Activated CD8-positive, alpha-beta T cell treated with anti-CD3 and anti-CD28 coated beads, Interleukin-2, amount 10 ng/mL, durations not matched to agents 7 days and 5 days (primary cell): ENCODE measurements at regions of chr15 and their contacts with region 1.

Region 1: DNA sequence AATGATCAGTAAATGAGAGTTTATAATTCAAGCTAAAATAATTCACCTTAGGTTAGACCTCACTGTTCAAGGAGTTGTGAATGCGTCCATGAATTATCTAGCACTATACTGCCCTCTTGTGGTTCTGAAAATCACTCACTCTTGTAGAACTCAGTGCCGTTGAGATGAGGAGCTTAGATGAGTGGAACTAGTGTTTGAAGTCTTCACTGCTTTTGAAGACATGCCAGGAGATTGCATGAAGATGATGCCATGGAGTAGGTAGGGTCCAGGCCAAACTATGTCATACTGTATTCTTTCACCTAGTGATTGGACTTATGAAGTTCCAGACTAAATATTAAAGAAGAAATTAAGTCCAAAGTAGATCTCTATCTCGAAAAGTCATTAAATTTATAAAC is 28.8 kb downstream of the LYSMD4 start:
- DNase-seq: peak; percentile 65
- ATAC-seq: peak; percentile 71
- H3K4me3 Mint-ChIP-seq: no peak overlapping the region
- H3K27ac Mint-ChIP-seq: no peak overlapping the region
- H3K4me1 Mint-ChIP-seq: peaks cover 48% of the 10 kb centered on the region
- H3K27me3 Mint-ChIP-seq: no peaks in the 10 kb centered on the region

Region 2: GRCh38 chr15:99250494-99251435 is 453.7 kb before region 1 on chr15:
- CTCF ChIA-PET with region 1: interaction called, 10 read pairs
- POLR2A ChIA-PET with region 1: no interaction called
- DNase-seq: peak; percentile 99
- ATAC-seq: peak; percentile 99
- H3K4me3 Mint-ChIP-seq: peak overlapping the region; percentile 87
- H3K27ac Mint-ChIP-seq: peak overlapping the region; percentile 91
- H3K4me1 Mint-ChIP-seq: peaks cover 24% of the 10 kb centered on the region
- H3K27me3 Mint-ChIP-seq: peaks cover 5% of the 10 kb centered on the region

Region 3: DNA sequence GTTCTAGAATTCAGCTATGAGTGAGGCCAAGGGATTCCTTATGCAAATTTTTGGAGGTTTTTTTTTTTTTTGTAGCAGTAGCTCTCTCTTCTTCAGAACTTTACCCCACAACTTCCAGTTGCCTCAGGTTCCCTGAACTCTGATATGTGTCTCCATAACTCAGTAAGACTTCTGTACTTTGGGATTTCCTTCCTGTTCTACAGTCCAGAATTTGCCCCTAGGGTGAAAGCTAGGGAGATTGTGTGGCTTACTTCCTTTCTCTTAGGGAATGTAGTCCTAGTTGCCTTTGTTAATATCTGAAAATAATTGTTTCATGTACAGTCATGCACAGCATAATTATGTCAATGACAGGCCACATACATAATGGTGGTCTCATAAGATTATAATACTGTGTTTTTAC is 422.3 kb before region 1 on chr15:
- CTCF ChIA-PET with region 1: interaction called, 120 read pairs
- POLR2A ChIA-PET with region 1: interaction called, 4 read pairs
- DNase-seq: no peak
- ATAC-seq: no peak
- H3K4me3 Mint-ChIP-seq: no peak overlapping the region
- H3K27ac Mint-ChIP-seq: no peak overlapping the region
- H3K4me1 Mint-ChIP-seq: peaks cover 23% of the 10 kb centered on the region
- H3K27me3 Mint-ChIP-seq: no peaks in the 10 kb centered on the region

Region 4: GRCh38 chr15:99371180-99372103 is 333.0 kb before region 1 on chr15:
- CTCF ChIA-PET with region 1: interaction called, 22 read pairs
- POLR2A ChIA-PET with region 1: no interaction called
- DNase-seq: no peak
- ATAC-seq: no peak
- H3K4me3 Mint-ChIP-seq: no peak overlapping the region
- H3K27ac Mint-ChIP-seq: no peak overlapping the region
- H3K4me1 Mint-ChIP-seq: peaks cover 16% of the 10 kb centered on the region
- H3K27me3 Mint-ChIP-seq: no peaks in the 10 kb centered on the region

Region 5: DNA sequence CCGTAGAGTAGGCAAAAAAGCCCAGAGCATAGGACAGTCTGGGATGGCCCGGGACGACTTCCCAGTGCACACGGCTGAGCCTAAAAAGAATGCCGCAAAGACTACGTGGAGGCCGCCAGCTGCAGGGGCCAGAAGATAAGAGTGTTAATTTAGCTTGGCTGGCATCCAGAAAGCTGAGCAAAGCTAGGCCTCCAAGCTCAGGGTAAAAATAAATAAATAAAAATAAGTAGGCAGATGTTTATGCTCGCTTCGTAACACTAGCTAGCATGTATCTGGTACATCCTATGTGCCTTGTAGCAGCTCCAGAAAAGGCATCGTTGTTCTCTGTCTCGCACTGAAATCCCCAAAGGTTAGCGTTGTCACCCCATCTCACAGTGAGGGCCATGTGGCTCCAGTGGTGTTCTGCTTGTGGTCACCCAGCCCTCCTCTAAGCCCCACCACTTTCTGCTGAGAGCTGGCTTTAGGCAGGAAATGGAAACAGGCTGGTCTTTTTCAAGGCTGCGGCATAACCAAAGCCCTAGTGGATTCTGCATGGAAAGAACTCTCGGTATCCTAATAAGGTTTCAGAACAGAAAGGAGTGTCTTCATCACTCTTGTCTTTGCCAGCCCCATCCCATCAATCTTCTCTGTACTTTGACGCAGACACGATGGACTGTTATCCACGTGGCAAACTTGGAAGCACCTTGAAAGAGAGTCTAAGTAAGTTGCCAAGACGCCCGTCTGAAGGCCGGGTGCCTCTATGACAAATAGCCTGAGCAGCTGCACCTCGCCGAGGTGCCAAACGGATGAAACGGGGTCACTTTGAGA is 196.7 kb before region 1 on chr15:
- CTCF ChIA-PET with region 1: interaction called, 20 read pairs
- POLR2A ChIA-PET with region 1: no interaction called
- DNase-seq: peak; percentile 68
- ATAC-seq: peak; percentile 79
- H3K4me3 Mint-ChIP-seq: no peak overlapping the region
- H3K27ac Mint-ChIP-seq: peak overlapping the region; percentile 51
- H3K4me1 Mint-ChIP-seq: peaks cover 83% of the 10 kb centered on the region
- H3K27me3 Mint-ChIP-seq: no peaks in the 10 kb centered on the region

Region 6: GRCh38 chr15:99719096-99719541 is 14.7 kb after region 1 on chr15:
- CTCF ChIA-PET with region 1: interaction called, 43 read pairs
- POLR2A ChIA-PET with region 1: no interaction called
- DNase-seq: no peak
- ATAC-seq: no peak
- H3K4me3 Mint-ChIP-seq: no peak overlapping the region
- H3K27ac Mint-ChIP-seq: peak overlapping the region; percentile 9
- H3K4me1 Mint-ChIP-seq: peaks cover 37% of the 10 kb centered on the region
- H3K27me3 Mint-ChIP-seq: no peaks in the 10 kb centered on the region

Region 7: GRCh38 chr15:99850517-99850916 is 146.1 kb after region 1 on chr15:
- CTCF ChIA-PET with region 1: no interaction called
- POLR2A ChIA-PET with region 1: no interaction called
- DNase-seq: no peak
- ATAC-seq: no peak
- H3K4me3 Mint-ChIP-seq: no peak overlapping the region
- H3K27ac Mint-ChIP-seq: no peak overlapping the region
- H3K4me1 Mint-ChIP-seq: no peaks in the 10 kb centered on the region
- H3K27me3 Mint-ChIP-seq: no peaks in the 10 kb centered on the region

Region 8: DNA sequence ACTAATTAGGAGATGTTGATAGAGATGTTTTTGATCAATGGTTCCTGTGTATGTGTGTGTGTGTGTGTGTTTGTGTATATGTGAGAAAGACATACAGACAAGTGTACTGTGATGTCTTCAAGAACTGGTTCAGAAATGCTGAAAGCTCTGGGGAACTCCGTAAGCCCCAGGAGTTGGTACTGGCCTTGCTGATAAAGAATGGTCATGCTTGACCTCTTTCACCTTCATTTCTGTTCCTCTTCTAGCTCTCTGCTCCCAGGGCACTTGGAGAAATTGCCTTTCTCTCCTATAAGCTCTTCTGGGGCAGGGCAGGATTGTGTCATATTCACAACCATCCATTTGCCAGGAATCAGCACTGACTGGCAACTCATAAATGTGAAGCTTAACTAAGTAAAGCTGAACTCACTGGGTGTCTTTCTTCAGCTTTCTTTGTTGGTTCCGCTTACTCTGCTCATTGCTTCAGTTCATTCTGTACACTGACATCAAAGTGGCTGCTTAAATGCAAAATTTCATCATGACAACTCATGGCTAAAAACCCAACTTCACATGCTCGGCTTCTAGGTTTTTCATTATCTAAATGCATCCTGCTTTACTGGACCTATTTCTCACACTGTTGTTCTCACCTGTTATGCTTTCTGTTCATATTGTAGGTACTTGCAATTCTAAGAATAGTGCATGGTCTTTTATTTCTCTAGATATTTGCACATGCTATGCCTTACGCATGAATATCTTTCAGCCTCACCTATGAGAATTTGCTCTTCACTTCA is 190.9 kb after region 1 on chr15:
- CTCF ChIA-PET with region 1: no interaction called
- POLR2A ChIA-PET with region 1: no interaction called
- DNase-seq: no peak
- ATAC-seq: no peak
- H3K4me3 Mint-ChIP-seq: no peak overlapping the region
- H3K27ac Mint-ChIP-seq: no peak overlapping the region
- H3K4me1 Mint-ChIP-seq: no peaks in the 10 kb centered on the region
- H3K27me3 Mint-ChIP-seq: no peaks in the 10 kb centered on the region